ENCODE measurements at regions of chr15 and their contacts with region 1.

Region 1: GRCh38 chr15:99733268-99734039 is at the start of gene LYSMD4:
- DNase-seq: peak; percentile 97 to 98
- ATAC-seq: peak; percentile 87 to 91
- H3K4me3 ChIP-seq: peak within 1 kb of the TSS; percentile 76 to 98 (median 84)
- H3K27ac ChIP-seq: peak within 1 kb of the TSS; percentile 85 to 94 (median 90)
- H3K4me1 ChIP-seq: peaks cover 27 to 33% of the 10 kb centered on the region in 2 donors
- H3K27me3 ChIP-seq: no peaks in the 10 kb centered on the region
- CTCF ChIP-seq: peak in 1 of 5 experiments; percentile 6
- POLR2A ChIP-seq: peak; percentile 90 to 94
- total RNA-seq, gene LYSMD4: 5.1 to 15.8 (median 11.9) TPM

Region 2: DNA sequence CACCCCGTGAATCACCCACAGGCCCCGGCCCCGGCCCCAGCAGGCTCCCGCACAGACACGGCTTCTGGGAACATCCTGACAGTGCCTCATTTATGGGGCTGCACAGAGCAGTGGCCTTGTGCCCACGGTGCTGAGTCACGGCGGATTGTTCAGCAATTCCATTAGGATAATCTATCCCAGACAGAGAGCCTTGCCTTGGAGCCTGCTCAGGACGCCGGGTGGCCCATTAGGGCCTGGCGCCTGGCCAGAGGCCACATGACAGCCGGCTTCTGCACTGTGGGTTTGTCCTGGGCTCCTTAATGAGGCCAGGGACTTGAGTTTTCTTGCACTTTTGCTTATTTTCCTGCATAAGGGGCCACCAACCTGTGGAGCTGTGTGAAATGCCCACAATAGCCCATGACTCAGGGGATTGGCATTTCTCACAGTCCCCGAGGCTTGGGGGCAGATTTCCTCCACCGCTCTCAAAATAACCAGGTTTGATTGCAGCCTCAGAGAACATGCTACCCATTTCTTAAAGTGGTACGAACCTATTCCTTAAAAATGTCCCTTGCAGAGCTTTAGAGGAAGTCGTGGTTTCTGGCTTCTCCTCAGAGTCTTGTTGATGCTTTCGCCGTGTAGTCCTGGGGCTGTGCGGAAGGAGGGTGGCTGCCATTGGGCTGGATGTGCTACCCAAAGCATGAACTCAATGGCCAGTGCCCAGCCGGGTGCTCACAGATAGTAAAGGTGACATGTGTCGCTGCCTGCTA is 609.6 kb before region 1 on chr15:
- in situ Hi-C with region 1: loop called in 2 of 4 experiments (anchors 25 kb)
- intact Hi-C with region 1: loop called (anchors 10 kb)
- DNase-seq: peak; percentile 85 to 93
- ATAC-seq: peak; percentile 82 to 88
- H3K4me3 ChIP-seq: peak overlapping the region; percentile 33 to 59 (median 44)
- H3K27ac ChIP-seq: peak overlapping the region; percentile 88 to 97 (median 94)
- H3K4me1 ChIP-seq: peaks cover 89 to 91% of the 10 kb centered on the region in 2 donors
- H3K27me3 ChIP-seq: no peaks in the 10 kb centered on the region
- CTCF ChIP-seq: no peak
- POLR2A ChIP-seq: peak; percentile 40 to 52

Region 3: GRCh38 chr15:99181545-99181971 is 551.9 kb before region 1 on chr15:
- in situ Hi-C with region 1: no loop called
- intact Hi-C with region 1: no loop called
- DNase-seq: peak; percentile 71 to 94
- ATAC-seq: peak; percentile 86 to 95
- H3K4me3 ChIP-seq: no peak overlapping the region
- H3K27ac ChIP-seq: peak overlapping the region; percentile 82 to 90 (median 86)
- H3K4me1 ChIP-seq: peaks cover 46 to 48% of the 10 kb centered on the region in 2 donors
- H3K27me3 ChIP-seq: no peaks in the 10 kb centered on the region
- CTCF ChIP-seq: no peak
- POLR2A ChIP-seq: peak in 1 of 2 donors; percentile 5

Region 4: GRCh38 chr15:99631255-99631654 is 102.2 kb before region 1 on chr15:
- in situ Hi-C with region 1: no loop called
- intact Hi-C with region 1: no loop called
- DNase-seq: no peak
- ATAC-seq: peak; percentile 85 to 92
- H3K4me3 ChIP-seq: peak overlapping the region in 1 of 4 donors; percentile 7
- H3K27ac ChIP-seq: peak overlapping the region; percentile 65 to 79 (median 70)
- H3K4me1 ChIP-seq: peaks cover 46 to 54% of the 10 kb centered on the region in 2 donors
- H3K27me3 ChIP-seq: no peaks in the 10 kb centered on the region
- CTCF ChIP-seq: no peak
- POLR2A ChIP-seq: no peak

Region 5: DNA sequence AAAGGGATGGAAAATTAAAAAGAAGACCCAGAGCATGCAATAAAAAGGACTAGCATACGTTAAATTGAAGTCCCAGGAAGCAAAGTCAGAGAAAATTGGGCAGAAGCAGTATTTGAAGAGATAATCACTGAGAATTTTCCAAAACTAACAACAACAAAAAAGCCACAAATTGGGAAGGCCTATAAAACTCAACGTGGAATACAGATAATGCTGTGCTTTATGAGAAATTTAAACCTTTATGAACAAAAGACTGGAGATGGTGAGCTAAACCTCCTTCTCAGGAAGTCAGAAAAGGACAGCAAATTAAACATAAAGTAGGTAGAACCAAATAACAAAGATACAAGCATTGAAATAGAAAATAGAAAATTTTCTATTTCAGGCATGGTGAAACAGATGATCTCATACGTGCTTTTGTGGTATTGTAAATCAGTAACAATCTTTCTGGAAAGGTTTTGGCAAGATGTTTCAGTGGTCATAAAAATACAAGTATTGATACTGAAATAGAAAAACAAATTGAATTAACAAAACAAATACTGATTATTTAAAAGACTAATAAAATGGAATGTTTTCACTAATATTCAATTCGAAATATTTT is 55.8 kb before region 1 on chr15:
- in situ Hi-C with region 1: no loop called
- intact Hi-C with region 1: no loop called
- DNase-seq: no peak
- ATAC-seq: no peak
- H3K4me3 ChIP-seq: no peak overlapping the region
- H3K27ac ChIP-seq: peak overlapping the region in 3 of 4 donors; percentile 3 to 35 (median 34)
- H3K4me1 ChIP-seq: peaks cover 6 to 10% of the 10 kb centered on the region in 2 donors
- H3K27me3 ChIP-seq: no peaks in the 10 kb centered on the region
- CTCF ChIP-seq: no peak
- POLR2A ChIP-seq: no peak

Region 6: GRCh38 chr15:99719096-99719541 is 14.3 kb before region 1 on chr15:
- in situ Hi-C with region 1: no loop called
- intact Hi-C with region 1: loop called (anchors 2 kb)
- DNase-seq: no peak
- ATAC-seq: no peak
- H3K4me3 ChIP-seq: no peak overlapping the region
- H3K27ac ChIP-seq: peak overlapping the region; percentile 63 to 76 (median 66)
- H3K4me1 ChIP-seq: peaks cover 52 to 59% of the 10 kb centered on the region in 2 donors
- H3K27me3 ChIP-seq: no peaks in the 10 kb centered on the region
- CTCF ChIP-seq: no peak
- POLR2A ChIP-seq: no peak

Region 7: GRCh38 chr15:100159436-100159835 is 426.0 kb after region 1 on chr15:
- in situ Hi-C with region 1: no loop called
- intact Hi-C with region 1: no loop called
- DNase-seq: no peak
- ATAC-seq: no peak
- H3K4me3 ChIP-seq: no peak overlapping the region
- H3K27ac ChIP-seq: no peak overlapping the region
- H3K4me1 ChIP-seq: no peaks in the 10 kb centered on the region
- H3K27me3 ChIP-seq: no peaks in the 10 kb centered on the region
- CTCF ChIP-seq: no peak
- POLR2A ChIP-seq: no peak

Measured in gastrocnemius medialis (tissue), 4 donors.